Activated CD8-positive, alpha-beta T cell treated with anti-CD3 and anti-CD28 coated beads for 36 hours (primary cell): ENCODE measurements at regions of chr16 and their contacts with region 1.

Region 1: DNA sequence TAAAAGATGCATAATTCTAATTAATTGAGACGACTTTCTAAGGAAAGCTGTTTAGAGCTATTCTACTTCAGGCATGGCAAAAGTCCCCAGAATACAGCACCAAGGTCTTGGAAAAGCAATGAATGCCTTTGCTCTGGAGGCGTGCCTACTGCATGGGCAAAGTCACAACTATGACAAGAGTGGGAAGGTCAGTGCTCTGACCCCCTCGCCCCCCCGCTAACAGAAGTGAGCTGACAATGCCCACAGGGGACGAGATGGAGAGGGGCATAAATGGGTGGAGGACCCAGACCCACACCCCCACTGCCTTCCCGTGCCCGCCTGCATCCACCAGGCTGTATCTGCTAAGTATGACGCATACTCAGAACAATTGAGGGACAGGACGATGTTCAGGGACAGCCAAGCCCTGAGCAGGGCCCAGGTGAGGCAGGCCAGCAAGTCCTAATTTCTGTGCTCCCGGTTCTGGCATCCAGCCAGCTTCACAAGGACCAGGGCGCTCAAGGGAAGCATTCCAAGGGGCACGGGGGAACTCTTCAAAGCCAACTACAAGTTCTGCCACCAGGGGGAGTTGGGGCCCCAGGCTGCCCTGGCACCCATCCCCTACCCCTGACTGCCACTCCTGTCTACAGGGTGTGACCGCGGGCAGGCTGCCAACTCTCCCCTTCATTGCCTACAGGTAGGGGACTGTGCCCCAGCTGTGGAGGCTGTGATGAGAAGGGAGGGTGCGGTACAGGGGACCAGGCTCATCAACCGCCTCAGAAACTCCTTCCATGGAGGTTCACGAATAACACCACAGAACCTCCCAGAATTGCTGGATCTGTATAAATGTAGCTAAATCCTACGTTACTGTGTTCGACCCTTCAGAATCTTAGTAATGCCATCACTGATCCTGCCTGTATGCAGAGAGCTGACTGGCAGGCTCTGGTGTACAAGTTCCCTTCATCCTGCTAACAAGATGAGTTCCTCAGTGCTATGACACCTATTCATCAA is 20.8 kb downstream of the NPRL3 start:
- DNase-seq: peak; percentile 72
- ATAC-seq: peak; percentile 87
- H3K4me3 Mint-ChIP-seq: no peak overlapping the region
- H3K27ac Mint-ChIP-seq: no peak overlapping the region
- H3K4me1 Mint-ChIP-seq: peaks cover 8% of the 10 kb centered on the region
- H3K27me3 Mint-ChIP-seq: no peaks in the 10 kb centered on the region
- CTCF ChIP-seq: peak; percentile 74

Region 2: GRCh38 chr16:38939-39892 is 78.5 kb before region 1 on chr16:
- CTCF ChIA-PET with region 1: no interaction called
- POLR2A ChIA-PET with region 1: no interaction called
- intact Hi-C with region 1: no loop called
- DNase-seq: peak; percentile 83
- ATAC-seq: peak; percentile 96
- H3K4me3 Mint-ChIP-seq: no peak overlapping the region
- H3K27ac Mint-ChIP-seq: peak overlapping the region; percentile 61
- H3K4me1 Mint-ChIP-seq: peaks cover 41% of the 10 kb centered on the region
- H3K27me3 Mint-ChIP-seq: no peaks in the 10 kb centered on the region
- CTCF ChIP-seq: no peak

Region 3: GRCh38 chr16:129075-129474 is 11.4 kb after region 1 on chr16:
- CTCF ChIA-PET with region 1: interaction called, 17 read pairs
- POLR2A ChIA-PET with region 1: no interaction called
- intact Hi-C with region 1: no loop called
- DNase-seq: peak; percentile 26
- ATAC-seq: peak; percentile 74
- H3K4me3 Mint-ChIP-seq: no peak overlapping the region
- H3K27ac Mint-ChIP-seq: peak overlapping the region; percentile 3
- H3K4me1 Mint-ChIP-seq: peaks cover 31% of the 10 kb centered on the region
- H3K27me3 Mint-ChIP-seq: no peaks in the 10 kb centered on the region
- CTCF ChIP-seq: no peak

Region 4: GRCh38 chr16:180938-181667 is 63.4 kb after region 1 on chr16:
- CTCF ChIA-PET with region 1: interaction called, 33 read pairs
- POLR2A ChIA-PET with region 1: interaction called, 5 read pairs
- intact Hi-C with region 1: no loop called
- DNase-seq: peak; percentile 91
- ATAC-seq: peak; percentile 88
- H3K4me3 Mint-ChIP-seq: peak overlapping the region; percentile 38
- H3K27ac Mint-ChIP-seq: no peak overlapping the region
- H3K4me1 Mint-ChIP-seq: peaks cover 4% of the 10 kb centered on the region
- H3K27me3 Mint-ChIP-seq: peaks cover 23% of the 10 kb centered on the region
- CTCF ChIP-seq: peak; percentile 98

Region 5: DNA sequence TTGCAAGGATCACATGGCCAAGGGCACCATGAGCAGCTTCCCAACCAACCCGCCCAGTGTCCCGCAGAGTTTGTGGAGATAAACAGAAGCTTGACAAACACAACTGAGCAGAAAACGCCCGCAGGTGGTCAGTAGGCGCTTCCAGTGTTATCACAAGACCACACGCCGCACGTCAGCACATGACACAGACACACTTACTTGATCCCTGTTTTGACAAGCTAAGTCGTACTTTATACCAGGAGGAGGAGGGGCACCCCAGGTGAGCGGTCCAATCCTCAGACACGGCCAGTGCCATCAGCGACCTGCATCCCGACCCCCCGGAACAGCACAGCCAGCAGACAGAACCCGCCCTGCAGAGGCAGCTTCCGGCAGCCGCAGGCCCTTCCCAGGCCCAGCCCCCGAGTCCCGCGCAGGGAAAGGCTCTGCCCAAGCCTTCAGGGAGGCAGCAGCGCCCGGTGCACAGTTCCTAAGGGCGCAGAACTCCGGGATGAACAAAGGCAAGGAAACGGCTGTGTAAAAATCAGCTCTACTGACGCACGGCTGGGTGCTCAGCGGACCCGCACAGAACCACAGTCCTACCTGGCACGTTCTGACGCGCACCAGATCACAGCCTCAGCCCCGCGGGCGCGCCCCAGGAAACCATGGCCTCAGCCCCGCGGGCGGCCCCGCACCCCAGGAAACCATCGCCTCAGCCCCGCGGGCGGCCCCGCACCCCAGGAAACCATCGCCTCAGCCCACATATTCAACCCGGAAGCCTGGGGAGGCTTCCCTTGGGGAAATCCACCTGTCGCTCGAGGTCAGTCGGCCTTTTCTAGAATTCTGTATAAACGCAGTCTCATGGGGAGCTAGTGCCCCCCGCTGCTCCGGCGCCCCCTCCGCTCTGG is 207.0 kb after region 1 on chr16:
- CTCF ChIA-PET with region 1: no interaction called
- POLR2A ChIA-PET with region 1: no interaction called
- intact Hi-C with region 1: no loop called
- DNase-seq: peak; percentile 64
- ATAC-seq: peak; percentile 52
- H3K4me3 Mint-ChIP-seq: peak overlapping the region; percentile 61
- H3K27ac Mint-ChIP-seq: peak overlapping the region; percentile 64
- H3K4me1 Mint-ChIP-seq: peaks cover 48% of the 10 kb centered on the region
- H3K27me3 Mint-ChIP-seq: no peaks in the 10 kb centered on the region
- CTCF ChIP-seq: no peak

Region 6: GRCh38 chr16:361872-362701 is 244.4 kb after region 1 on chr16:
- CTCF ChIA-PET with region 1: interaction called, 14 read pairs
- POLR2A ChIA-PET with region 1: interaction called, 3 read pairs
- intact Hi-C with region 1: no loop called
- DNase-seq: peak; percentile 84
- ATAC-seq: peak; percentile 93
- H3K4me3 Mint-ChIP-seq: no peak overlapping the region
- H3K27ac Mint-ChIP-seq: no peak overlapping the region
- H3K4me1 Mint-ChIP-seq: peaks cover 6% of the 10 kb centered on the region
- H3K27me3 Mint-ChIP-seq: no peaks in the 10 kb centered on the region
- CTCF ChIP-seq: peak; percentile 86